Lower leg skin (tissue), 4 donors: ENCODE measurements at regions of chr1 and their contacts with region 1.

Region 1: DNA sequence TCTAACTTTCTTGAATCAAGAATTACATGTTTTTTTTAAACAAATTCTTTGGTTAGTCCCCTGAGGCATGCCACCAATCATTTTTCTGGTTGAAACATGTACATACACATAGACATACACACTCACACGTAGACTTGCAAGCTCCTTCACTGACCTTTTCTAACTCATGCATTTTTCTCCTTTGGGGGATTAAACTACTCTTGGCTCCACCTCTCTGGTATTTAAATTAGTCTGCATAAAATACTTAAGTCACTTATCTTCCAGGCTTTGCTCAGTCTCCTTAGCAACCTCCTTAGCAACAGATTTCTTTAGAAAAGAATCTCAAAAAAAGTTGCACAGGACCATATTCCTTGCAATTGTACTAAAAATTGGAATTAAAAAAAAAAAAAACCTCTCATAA is 440.9 kb upstream of the LRRC7 start:
- DNase-seq: no peak
- H3K4me3 ChIP-seq: no peak overlapping the region
- CTCF ChIP-seq: no peak
- POLR2A ChIP-seq: no peak

Region 2: DNA sequence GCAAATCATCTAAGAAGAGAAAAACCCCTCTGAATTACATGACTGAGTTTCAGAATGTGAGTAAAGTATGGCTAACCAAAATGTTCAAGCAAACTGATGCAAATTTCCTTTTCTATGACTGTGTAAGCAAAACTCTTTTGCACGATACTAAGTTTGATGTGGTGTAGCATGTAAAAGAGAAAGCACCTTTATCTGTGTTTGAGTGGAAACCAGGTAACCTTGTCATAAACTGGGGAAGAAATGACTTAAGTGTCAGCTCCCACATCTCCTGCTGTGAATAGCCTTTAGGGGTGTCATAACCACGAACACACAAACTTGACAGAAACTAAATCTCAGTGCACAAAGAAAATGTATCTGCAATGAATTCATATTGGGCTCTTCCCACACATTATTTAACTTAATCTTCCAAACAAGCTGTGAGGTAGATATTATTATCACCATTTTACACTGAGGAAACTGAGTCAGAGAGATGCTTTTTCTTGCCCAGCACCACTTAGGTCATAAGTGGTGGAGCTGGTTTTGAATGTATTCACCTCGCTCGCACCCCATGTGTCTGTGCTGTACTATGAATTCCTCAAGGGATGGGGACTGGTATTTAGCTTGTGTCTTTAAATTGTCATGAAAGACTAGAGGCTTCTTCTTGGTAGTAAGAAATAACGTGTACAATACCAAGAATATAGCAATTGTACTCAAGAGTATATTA is 1852.0 kb before region 1 on chr1:
- intact Hi-C with region 1: no loop called
- DNase-seq: no peak
- H3K4me3 ChIP-seq: no peak overlapping the region
- CTCF ChIP-seq: no peak
- POLR2A ChIP-seq: no peak

Region 3: DNA sequence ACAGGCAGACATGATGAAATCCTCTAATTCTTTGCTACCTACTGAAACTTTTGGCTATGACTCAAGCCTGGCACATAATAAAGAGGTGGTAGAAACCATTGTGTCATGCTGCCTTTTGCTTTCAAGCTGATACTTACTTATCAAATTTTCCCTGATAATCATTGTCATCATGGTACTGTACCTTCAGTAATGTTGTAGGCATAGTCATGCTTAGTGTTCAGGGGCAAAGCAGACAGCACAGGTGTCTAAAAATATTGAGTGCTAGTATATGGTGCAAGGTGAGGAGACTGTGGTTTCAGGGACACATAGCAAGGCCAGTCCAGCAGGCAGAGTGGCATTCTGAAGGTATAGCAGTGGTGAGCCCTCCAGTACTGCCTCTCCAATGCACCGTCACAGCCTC is 403.0 kb before region 1 on chr1:
- intact Hi-C with region 1: no loop called
- DNase-seq: no peak
- H3K4me3 ChIP-seq: no peak overlapping the region
- CTCF ChIP-seq: no peak
- POLR2A ChIP-seq: no peak

Region 4: DNA sequence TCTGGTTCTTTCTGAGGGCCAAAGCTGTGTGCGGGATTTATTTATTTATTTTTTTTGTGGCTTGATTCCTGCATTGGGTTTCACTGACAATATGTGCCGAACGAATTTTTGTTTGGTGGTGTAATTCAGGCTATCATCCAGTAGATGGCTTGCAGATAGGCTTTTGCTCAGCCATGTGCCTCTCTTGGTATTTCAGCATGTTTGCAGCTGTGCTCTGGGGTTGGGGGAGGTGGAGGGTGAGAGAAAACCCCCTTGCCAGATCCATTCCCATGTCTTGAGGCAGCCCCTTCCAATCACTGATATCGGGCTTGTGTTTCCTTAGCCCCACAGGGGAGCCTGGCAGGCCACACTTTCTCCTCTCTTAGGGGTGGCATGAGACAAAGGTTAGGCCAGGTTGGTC is 1618.4 kb after region 1 on chr1:
- intact Hi-C with region 1: loop called (anchors 5 kb)
- DNase-seq: no peak
- H3K4me3 ChIP-seq: no peak overlapping the region
- CTCF ChIP-seq: no peak
- POLR2A ChIP-seq: no peak